Activated T-helper 1 cell treated with anti-CD3 and anti-CD28 coated beads, Interleukin-12 subunit alpha, Interleukin-12 subunit beta, Interleukin-2, Interleukin-4 antibody, amounts not matched to agents 30 ng/mL and 10 ng/mL and 1 ng/mL, durations not matched to agents 14 hours and 24 hours and 36 hours (primary cell): ENCODE measurements at regions of chr12 and their contacts with region 1.

Region 1: GRCh38 chr12:6335451-6336078 is 6.3 kb downstream of the TNFRSF1A start:
- DNase-seq: peak; percentile 80
- H3K4me3 Mint-ChIP-seq: no peak overlapping the region
- H3K27ac Mint-ChIP-seq: no peak overlapping the region
- H3K4me1 Mint-ChIP-seq: peaks cover 37% of the 10 kb centered on the region
- H3K27me3 Mint-ChIP-seq: no peaks in the 10 kb centered on the region

Region 2: DNA sequence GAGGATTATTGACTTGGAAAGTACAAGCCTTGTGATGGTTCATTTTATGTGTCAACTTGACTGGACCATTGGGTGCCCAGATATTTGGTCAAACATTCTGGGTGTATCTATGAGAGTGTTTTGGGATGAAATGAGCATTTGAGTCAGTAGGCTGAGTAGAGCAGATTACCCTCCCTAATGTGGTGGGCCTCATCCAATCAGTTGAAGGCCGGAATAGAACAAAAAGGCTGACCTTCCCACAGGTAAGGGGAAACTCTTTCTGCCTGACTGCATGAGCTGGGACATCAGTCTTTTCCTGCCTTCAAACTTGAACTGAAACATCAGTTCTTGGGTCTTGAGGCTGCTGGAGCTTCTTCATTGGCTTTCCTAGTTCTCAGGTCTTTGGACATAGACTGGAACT is 488.6 kb before region 1 on chr12:
- intact Hi-C with region 1: no loop called
- DNase-seq: no peak
- H3K4me3 Mint-ChIP-seq: no peak overlapping the region
- H3K27ac Mint-ChIP-seq: no peak overlapping the region
- H3K4me1 Mint-ChIP-seq: no peaks in the 10 kb centered on the region
- H3K27me3 Mint-ChIP-seq: no peaks in the 10 kb centered on the region

Region 3: GRCh38 chr12:6215932-6216494 is 119.6 kb before region 1 on chr12:
- intact Hi-C with region 1: no loop called
- DNase-seq: no peak
- H3K4me3 Mint-ChIP-seq: peak overlapping the region; percentile 0
- H3K27ac Mint-ChIP-seq: peak overlapping the region; percentile 86
- H3K4me1 Mint-ChIP-seq: peaks cover 57% of the 10 kb centered on the region
- H3K27me3 Mint-ChIP-seq: peaks cover 4% of the 10 kb centered on the region

Region 4: GRCh38 chr12:6323340-6323994 is 12.1 kb before region 1 on chr12:
- intact Hi-C with region 1: loop called (anchors 1 kb)
- DNase-seq: no peak
- H3K4me3 Mint-ChIP-seq: peak overlapping the region; percentile 71
- H3K27ac Mint-ChIP-seq: peak overlapping the region; percentile 90
- H3K4me1 Mint-ChIP-seq: peaks cover 31% of the 10 kb centered on the region
- H3K27me3 Mint-ChIP-seq: no peaks in the 10 kb centered on the region

Region 5: GRCh38 chr12:6367065-6367968 is 31.8 kb after region 1 on chr12:
- intact Hi-C with region 1: loop called (anchors 1 kb)
- DNase-seq: no peak
- H3K4me3 Mint-ChIP-seq: no peak overlapping the region
- H3K27ac Mint-ChIP-seq: peak overlapping the region; percentile 3
- H3K4me1 Mint-ChIP-seq: peaks cover 20% of the 10 kb centered on the region
- H3K27me3 Mint-ChIP-seq: no peaks in the 10 kb centered on the region

Region 6: DNA sequence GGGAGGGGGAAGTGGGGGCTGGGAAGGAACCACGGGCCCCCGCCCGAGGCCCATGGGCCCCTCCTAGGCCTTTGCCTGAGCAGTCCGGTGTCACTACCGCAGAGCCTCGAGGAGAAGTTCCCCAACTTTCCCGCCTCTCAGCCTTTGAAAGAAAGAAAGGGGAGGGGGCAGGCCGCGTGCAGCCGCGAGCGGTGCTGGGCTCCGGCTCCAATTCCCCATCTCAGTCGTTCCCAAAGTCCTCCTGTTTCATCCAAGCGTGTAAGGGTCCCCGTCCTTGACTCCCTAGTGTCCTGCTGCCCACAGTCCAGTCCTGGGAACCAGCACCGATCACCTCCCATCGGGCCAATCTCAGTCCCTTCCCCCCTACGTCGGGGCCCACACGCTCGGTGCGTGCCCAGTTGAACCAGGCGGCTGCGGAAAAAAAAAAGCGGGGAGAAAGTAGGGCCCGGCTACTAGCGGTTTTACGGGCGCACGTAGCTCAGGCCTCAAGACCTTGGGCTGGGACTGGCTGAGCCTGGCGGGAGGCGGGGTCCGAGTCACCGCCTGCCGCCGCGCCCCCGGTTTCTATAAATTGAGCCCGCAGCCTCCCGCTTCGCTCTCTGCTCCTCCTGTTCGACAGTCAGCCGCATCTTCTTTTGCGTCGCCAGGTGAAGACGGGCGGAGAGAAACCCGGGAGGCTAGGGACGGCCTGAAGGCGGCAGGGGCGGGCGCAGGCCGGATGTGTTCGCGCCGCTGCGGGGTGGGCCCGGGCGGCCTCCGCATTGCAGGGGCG is 198.5 kb after region 1 on chr12 and contains the start of gene GAPDH:
- intact Hi-C with region 1: loop called (anchors 2 kb)
- DNase-seq: peak; percentile 86
- H3K4me3 Mint-ChIP-seq: peak within 1 kb of the TSS; percentile 91
- H3K27ac Mint-ChIP-seq: peak within 1 kb of the TSS; percentile 99
- H3K4me1 Mint-ChIP-seq: peaks cover 58% of the 10 kb centered on the region
- H3K27me3 Mint-ChIP-seq: no peaks in the 10 kb centered on the region
- total RNA-seq, gene GAPDH: 4,315 and 4,318 TPM in 2 replicates

Region 7: GRCh38 chr12:6554168-6555017 is 218.8 kb after region 1 on chr12:
- intact Hi-C with region 1: loop called (anchors 5 kb)
- DNase-seq: no peak
- H3K4me3 Mint-ChIP-seq: peak overlapping the region; percentile 88
- H3K27ac Mint-ChIP-seq: peak overlapping the region; percentile 61
- H3K4me1 Mint-ChIP-seq: peaks cover 36% of the 10 kb centered on the region
- H3K27me3 Mint-ChIP-seq: no peaks in the 10 kb centered on the region